Left colon (tissue), 2 donors: ENCODE measurements at regions of chr10 and their contacts with region 1.

Region 1: DNA sequence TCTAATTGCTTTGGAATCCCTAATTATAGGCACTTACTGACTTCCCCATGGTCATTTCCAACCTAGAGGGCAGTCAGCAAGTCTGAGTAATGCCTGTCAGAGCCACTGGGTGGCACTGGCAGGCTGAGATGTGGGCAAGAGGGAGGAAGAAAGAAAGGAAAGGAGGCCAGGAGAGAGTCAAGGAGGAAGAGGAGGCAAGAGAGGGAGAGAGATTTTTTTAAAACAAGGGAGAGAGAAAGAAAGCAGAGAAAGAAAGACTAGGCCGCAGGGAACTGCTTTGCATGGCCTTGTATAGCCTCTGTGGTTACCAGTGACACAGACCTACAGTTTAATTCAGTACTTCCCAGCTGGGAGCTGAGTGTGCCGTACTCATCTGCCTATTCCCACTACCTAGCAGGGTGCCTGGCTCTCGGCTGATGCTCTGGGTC is 210.4 kb upstream of the ADO start:
- DNase-seq: peak in 1 of 2 donors; percentile 62
- ATAC-seq: peak; percentile 91

Region 2: GRCh38 chr10:62696798-62697197 is 102.7 kb after region 1 on chr10:
- intact Hi-C with region 1: no loop called
- DNase-seq: no peak
- ATAC-seq: no peak

Region 3: GRCh38 chr10:62816331-62817120 is 222.4 kb after region 1 on chr10 and contains the start of gene EGR2:
- intact Hi-C with region 1: loop called in 1 of 2 experiments (anchors 5 kb)
- DNase-seq: peak; percentile 94 to 95
- ATAC-seq: peak; percentile 88
- total RNA-seq, gene EGR2: 1.1 to 1.2 TPM

Region 4: GRCh38 chr10:63083904-63084689 is 490.0 kb after region 1 on chr10:
- intact Hi-C with region 1: loop called in 1 of 2 experiments (anchors 5 kb)
- DNase-seq: peak; percentile 34 to 40
- ATAC-seq: peak; percentile 70

Region 5: GRCh38 chr10:63157845-63158624 is 563.9 kb after region 1 on chr10:
- intact Hi-C with region 1: loop called in 1 of 2 experiments (anchors 5 kb)
- DNase-seq: no peak
- ATAC-seq: peak; percentile 49